B cell (primary cell): ENCODE measurements at regions of chr12 and their contacts with region 1.

Region 1: DNA sequence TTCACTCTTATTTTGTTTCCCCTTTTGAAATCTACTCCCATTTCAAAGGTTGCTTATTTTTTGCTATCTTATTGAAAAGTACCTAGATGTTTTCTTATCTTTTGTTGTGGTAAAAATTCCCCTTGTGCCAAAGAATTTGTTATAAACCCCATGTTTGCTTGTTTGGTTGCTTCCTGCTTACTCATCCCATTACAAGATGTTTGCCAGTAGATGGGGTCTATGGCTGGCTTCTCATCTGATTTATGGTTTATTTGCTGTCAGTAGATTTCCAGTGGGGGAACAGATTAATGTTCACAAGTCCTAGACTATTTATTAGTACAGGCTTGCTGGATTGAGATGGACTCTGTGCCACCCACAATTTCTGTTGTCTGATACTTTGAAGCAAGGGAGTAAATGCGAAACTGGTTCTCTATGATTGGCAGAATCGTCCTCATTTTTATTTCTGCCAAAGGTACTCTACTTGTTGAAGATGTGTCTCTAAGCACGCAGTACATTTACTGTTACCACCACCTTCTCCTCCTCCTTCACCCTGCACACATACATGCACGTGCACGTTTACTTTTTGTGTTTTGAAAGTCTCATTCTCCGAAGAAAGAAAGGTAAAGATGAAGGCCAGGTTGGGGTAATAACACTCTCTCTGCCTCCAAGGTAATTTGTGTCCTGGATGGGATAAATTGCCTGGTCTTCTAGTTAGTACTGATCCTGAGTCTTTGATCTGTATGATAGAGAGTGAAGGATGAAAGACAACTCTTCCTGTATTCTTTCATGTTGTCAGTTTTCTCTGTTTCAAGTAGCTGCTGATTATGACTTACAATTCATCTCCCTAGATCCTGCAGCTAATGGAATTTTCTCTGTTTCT is 117.2 kb upstream of the ATP2B1 start:
- DNase-seq: no peak
- ATAC-seq: no peak
- H3K4me3 ChIP-seq: no peak overlapping the region
- H3K4me3 Mint-ChIP-seq: no peak overlapping the region
- H3K27ac ChIP-seq: no peak overlapping the region
- H3K27ac Mint-ChIP-seq: no peak overlapping the region
- H3K4me1 ChIP-seq: peaks cover 4 to 11% of the 10 kb centered on the region in 2 donors
- H3K4me1 Mint-ChIP-seq: peaks cover 19% of the 10 kb centered on the region
- H3K27me3 ChIP-seq: no peaks in the 10 kb centered on the region
- H3K27me3 Mint-ChIP-seq: no peaks in the 10 kb centered on the region
- CTCF ChIP-seq: no peak

Region 2: DNA sequence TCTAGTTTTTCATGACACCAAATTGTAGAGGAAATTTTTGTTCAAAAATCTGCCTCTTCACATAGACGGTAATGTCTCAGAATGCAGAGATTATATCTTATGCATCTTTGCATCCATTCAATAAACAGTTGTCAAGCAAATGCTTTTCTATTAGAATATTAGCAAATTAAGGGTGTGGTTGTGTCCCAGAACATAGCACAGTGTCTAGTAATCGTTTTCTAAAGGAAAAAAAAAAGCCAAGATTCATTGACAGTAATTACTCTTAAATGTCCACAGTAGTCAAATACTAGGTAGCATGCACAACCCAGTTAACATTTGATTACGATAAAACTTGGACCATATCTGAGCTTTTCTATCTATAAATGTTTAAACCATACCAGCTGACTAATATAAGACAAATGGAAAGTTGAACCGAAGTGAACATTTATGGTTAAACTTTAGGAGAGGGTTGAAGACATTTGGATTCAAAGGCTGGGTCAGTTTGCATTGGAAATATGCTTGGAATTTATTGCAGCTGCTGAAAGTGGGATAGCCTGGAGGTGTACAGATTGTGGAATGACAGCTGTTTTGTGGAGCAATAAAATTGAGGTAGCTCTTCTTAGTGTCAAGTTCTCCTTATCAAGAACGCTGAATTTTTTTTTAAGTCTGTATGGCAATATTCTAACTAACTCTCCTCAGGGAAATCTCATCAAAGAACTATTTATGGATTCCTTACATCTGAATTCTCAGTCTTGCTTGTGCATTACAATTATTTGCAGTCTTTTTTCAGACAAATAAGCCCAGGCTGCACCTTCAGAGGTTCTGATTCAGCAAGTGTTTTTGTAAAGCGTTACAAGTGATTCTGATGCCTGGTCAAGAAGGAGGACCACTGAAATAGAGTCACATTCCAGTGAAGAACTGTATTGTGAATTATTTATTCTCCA is 50.5 kb before region 1 on chr12:
- CTCF ChIA-PET with region 1: no interaction called
- POLR2A ChIA-PET with region 1: no interaction called
- intact Hi-C with region 1: loop called (anchors 10 kb)
- DNase-seq: no peak
- ATAC-seq: no peak
- H3K4me3 ChIP-seq: no peak overlapping the region
- H3K4me3 Mint-ChIP-seq: no peak overlapping the region
- H3K27ac ChIP-seq: no peak overlapping the region
- H3K27ac Mint-ChIP-seq: no peak overlapping the region
- H3K4me1 ChIP-seq: peaks cover under 1 to 4% of the 10 kb centered on the region in 2 donors
- H3K4me1 Mint-ChIP-seq: peaks cover 2% of the 10 kb centered on the region
- H3K27me3 ChIP-seq: no peaks in the 10 kb centered on the region
- H3K27me3 Mint-ChIP-seq: no peaks in the 10 kb centered on the region
- CTCF ChIP-seq: no peak

Region 3: DNA sequence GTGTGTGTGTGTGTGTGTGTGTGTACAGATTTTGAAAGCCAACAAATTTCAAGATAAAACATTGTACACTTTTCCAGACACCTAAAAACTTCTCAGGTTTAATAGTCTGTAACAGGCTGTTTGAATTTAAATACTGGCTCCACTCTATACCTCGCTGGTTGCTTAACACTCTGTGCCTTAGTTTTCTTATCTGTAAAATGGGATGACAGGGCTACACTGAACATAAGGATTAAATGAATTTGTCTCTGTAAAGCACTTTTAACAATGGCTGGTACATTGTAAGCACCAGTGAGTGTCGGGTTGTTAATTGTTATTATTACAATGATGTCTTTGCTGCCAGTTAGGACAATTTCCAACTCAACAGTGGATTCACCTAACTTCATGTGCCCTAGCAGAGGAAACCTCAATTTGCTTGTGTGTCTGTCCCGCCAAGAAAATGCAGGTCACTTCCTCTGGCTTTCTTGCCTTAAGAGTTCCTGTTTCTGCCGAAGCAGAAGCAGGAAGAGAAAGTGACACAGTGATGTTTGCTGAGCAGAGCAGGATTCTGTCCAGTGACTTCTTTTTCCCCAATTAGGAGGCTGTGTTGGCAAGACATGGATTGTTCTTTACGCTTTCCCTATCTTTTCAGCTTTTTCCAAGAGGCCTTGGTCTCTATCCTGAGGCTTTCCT is 36.8 kb after region 1 on chr12:
- CTCF ChIA-PET with region 1: no interaction called
- POLR2A ChIA-PET with region 1: no interaction called
- intact Hi-C with region 1: loop called (anchors 5 kb)
- DNase-seq: peak; percentile 88
- ATAC-seq: peak; percentile 68
- H3K4me3 ChIP-seq: peak overlapping the region; percentile 23 to 65 (median 44)
- H3K4me3 Mint-ChIP-seq: peak overlapping the region; percentile 86
- H3K27ac ChIP-seq: peak overlapping the region; percentile 92 to 96
- H3K27ac Mint-ChIP-seq: peak overlapping the region; percentile 98
- H3K4me1 ChIP-seq: peaks cover 58 to 65% of the 10 kb centered on the region in 2 donors
- H3K4me1 Mint-ChIP-seq: peaks cover 68% of the 10 kb centered on the region
- H3K27me3 ChIP-seq: no peaks in the 10 kb centered on the region
- H3K27me3 Mint-ChIP-seq: no peaks in the 10 kb centered on the region
- CTCF ChIP-seq: no peak

Region 4: DNA sequence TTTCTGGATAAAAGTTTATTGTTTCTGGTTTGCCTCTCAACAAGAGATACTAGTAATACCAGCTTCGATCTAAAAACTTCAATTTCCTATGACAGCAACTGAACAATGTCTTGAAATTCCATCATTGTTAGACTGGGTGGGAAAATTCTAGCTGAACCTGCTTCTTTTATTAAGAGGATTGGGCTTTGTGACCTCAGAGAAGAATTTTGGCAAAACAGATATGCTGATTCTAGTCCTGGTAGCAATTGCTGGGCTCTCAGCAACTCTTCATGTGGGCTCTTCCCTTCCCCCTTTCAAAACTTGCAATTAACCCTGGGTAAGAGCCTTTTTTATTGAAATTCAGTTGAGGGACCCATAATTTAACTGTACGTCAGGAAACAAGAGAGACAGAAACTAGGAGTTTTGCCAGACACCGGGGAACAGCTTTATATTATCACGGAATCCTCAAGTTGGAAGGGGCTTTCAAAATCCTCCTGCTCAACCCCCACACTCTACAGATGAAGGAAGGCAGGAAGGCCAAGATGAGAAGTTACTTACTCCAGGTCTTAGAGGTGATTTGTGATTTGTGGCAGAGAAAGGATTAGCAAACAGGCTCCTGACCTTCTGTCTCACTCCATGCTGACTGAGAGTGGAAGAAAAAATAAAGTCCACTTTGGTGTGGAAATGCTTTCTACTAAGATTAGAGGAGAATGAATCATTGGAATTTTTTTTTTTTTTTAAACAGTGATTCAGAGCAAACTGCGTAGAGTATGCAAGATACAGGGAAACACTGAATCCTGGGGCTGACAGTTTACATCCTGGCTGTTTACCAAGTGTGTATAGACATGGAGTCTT is 121.8 kb after region 1 on chr12:
- CTCF ChIA-PET with region 1: no interaction called
- POLR2A ChIA-PET with region 1: no interaction called
- intact Hi-C with region 1: no loop called
- DNase-seq: no peak
- ATAC-seq: no peak
- H3K4me3 ChIP-seq: no peak overlapping the region
- H3K4me3 Mint-ChIP-seq: peak overlapping the region; percentile 32
- H3K27ac ChIP-seq: peak overlapping the region; percentile 42 to 98
- H3K27ac Mint-ChIP-seq: peak overlapping the region; percentile 81
- H3K4me1 ChIP-seq: peaks cover 53 to 62% of the 10 kb centered on the region in 2 donors
- H3K4me1 Mint-ChIP-seq: peaks cover 73% of the 10 kb centered on the region
- H3K27me3 ChIP-seq: no peaks in the 10 kb centered on the region
- H3K27me3 Mint-ChIP-seq: no peaks in the 10 kb centered on the region
- CTCF ChIP-seq: no peak